Left colon (tissue), 2 donors: ENCODE measurements at regions of chr15 and their contacts with region 1.

Region 1: GRCh38 chr15:50876989-50877360 is 31.5 kb upstream of the AP4E1 start:
- DNase-seq: peak; percentile 61 to 69
- ATAC-seq: peak; percentile 62

Region 2: GRCh38 chr15:50435772-50436171 is 441.2 kb before region 1 on chr15:
- intact Hi-C with region 1: no loop called
- DNase-seq: no peak
- ATAC-seq: peak; percentile 78

Region 3: GRCh38 chr15:50675536-50676144 is 201.3 kb before region 1 on chr15:
- intact Hi-C with region 1: loop called (anchors 5 to 10 kb)
- DNase-seq: no peak
- ATAC-seq: peak; percentile 33

Region 4: DNA sequence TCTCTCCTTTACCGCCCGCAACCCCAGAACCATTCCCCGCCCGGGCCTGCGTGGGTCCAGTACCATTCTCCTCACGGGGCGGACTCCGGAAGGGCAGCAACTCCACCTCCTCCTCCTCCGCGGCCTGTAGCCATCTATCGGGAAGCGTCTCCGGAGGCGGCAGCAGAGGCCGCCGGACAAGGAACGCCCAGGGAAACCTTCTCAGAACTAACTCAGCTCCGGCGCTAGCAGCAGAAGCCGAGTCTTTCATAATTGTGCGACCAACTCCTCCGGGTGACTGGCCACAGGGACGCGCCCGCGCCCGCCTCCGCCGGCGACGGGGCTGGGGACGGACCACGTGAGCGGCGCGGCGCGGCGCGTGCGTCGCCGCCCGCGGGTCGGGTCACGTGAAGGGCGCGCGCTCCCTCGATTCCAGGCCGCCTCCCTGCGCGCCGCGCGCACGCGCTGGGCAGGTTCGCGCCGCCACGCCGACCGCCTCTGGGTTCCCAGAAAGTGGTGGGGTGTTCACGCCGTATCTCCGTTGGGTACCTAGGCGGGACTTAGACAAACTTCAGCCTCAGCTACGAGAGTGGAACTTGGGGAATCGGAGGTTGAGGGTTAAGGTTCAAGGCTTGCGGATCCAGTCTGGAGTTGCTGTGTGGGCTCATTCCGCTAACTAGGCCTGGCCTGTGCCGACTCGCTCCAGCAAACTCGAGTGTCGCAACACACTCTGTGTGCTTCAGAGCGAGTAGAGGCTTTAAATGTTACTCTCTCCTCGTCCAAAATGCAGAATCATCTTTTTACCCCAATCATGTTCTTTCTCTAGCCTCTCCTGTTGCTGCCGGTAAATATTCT is 190.3 kb before region 1 on chr15 and contains the start of gene TRPM7:
- intact Hi-C with region 1: loop called in 1 of 2 experiments (anchors 10 kb)
- DNase-seq: peak; percentile 83 to 93
- ATAC-seq: peak; percentile 93
- total RNA-seq, gene TRPM7: 36.8 to 36.9 TPM

Region 5: GRCh38 chr15:50765195-50765973 is 111.6 kb before region 1 on chr15 and contains the start of gene SPPL2A:
- intact Hi-C with region 1: loop called in 1 of 2 experiments (anchors 10 kb)
- DNase-seq: peak; percentile 85 to 88
- ATAC-seq: peak; percentile 81
- total RNA-seq, gene SPPL2A: 263 to 348 TPM

Region 6: GRCh38 chr15:50968353-50968752 is 91.4 kb after region 1 on chr15:
- intact Hi-C with region 1: no loop called
- DNase-seq: no peak
- ATAC-seq: no peak